ENCODE measurements at regions of chr11 and their contacts with region 1.

Region 1: GRCh38 chr11:117843666-117844484 is 19.3 kb upstream of the FXYD2 start:
- H3K4me3 ChIP-seq: no peak overlapping the region
- H3K27ac ChIP-seq: no peak overlapping the region
- H3K4me1 ChIP-seq: no peaks in the 10 kb centered on the region
- CTCF ChIP-seq: peak; percentile 64

Region 2: GRCh38 chr11:117690484-117691217 is 153.2 kb before region 1 on chr11:
- CTCF ChIA-PET with region 1: no interaction called
- POLR2A ChIA-PET with region 1: no interaction called
- H3K4me3 ChIP-seq: no peak overlapping the region
- H3K27ac ChIP-seq: no peak overlapping the region
- H3K4me1 ChIP-seq: no peaks in the 10 kb centered on the region
- CTCF ChIP-seq: no peak

Region 3: GRCh38 chr11:117828611-117829368 is 15.1 kb before region 1 on chr11:
- CTCF ChIA-PET with region 1: interaction called, 17 read pairs
- POLR2A ChIA-PET with region 1: no interaction called
- H3K4me3 ChIP-seq: no peak overlapping the region
- H3K27ac ChIP-seq: no peak overlapping the region
- H3K4me1 ChIP-seq: no peaks in the 10 kb centered on the region
- CTCF ChIP-seq: no peak

Region 4: GRCh38 chr11:117907251-117907981 is 63.5 kb after region 1 on chr11:
- CTCF ChIA-PET with region 1: interaction called, 20 read pairs
- POLR2A ChIA-PET with region 1: no interaction called
- H3K4me3 ChIP-seq: no peak overlapping the region
- H3K27ac ChIP-seq: no peak overlapping the region
- H3K4me1 ChIP-seq: no peaks in the 10 kb centered on the region
- CTCF ChIP-seq: no peak

Region 5: DNA sequence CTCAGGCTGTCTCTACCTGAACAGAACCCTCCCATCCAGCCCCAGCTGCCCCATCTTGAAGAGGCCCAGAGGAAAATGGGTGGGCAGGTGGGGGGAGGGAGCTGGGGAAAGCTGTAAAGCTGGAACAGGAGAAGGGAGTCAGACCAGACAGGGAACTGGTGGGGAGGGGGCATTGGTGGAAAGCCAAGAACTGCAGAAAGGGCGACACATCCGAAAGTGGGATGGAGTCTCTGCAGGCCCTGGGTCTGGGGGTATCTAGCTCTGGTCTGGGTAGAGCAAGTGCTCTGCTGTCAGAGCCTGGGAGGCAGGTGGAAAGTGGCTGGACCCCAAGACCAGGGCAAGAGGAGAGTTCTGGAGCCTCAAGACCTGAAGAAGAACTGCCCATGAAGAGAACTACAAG is 77.6 kb after region 1 on chr11:
- CTCF ChIA-PET with region 1: interaction called, 10 read pairs
- POLR2A ChIA-PET with region 1: no interaction called
- H3K4me3 ChIP-seq: no peak overlapping the region
- H3K27ac ChIP-seq: no peak overlapping the region
- H3K4me1 ChIP-seq: no peaks in the 10 kb centered on the region
- CTCF ChIP-seq: no peak

Region 6: DNA sequence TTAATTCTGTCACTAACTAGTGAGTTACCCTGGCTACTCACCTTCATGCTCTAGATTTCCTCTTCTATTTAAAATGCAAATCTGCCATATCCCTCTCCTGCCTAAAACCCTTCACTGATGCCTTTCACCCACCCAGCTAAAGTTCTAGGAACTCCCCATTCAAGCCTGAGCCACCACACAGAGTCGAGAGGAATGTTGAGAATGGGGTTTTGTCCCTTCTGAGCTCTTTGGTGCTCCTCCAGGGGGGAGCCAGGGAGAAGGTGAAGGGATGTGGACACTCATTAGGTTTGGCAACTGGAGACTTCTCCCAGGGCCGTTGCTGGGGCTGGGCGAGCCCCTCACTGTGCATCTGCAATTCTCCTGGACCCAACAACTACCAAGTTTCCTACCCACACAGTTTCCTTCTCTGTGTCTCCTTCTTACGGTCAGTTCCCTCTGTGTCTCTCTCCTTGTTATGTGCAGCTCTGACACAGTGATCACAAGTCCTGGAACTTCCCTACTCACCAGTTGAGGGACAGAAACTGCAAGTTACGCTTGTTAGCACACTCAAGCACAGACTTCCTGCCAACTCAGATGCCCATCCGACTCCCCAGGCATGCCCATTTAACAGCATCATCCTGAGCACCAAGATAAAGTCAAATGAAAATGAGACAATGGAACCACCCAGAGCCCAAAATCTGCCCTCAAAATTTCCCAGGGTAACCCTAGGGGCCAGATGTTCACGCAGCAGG is 135.8 kb after region 1 on chr11:
- CTCF ChIA-PET with region 1: no interaction called
- POLR2A ChIA-PET with region 1: no interaction called
- H3K4me3 ChIP-seq: no peak overlapping the region
- H3K27ac ChIP-seq: no peak overlapping the region
- H3K4me1 ChIP-seq: no peaks in the 10 kb centered on the region
- CTCF ChIP-seq: no peak

Region 7: GRCh38 chr11:118051611-118052461 is 208.0 kb after region 1 on chr11:
- CTCF ChIA-PET with region 1: interaction called, 27 read pairs
- POLR2A ChIA-PET with region 1: no interaction called
- H3K4me3 ChIP-seq: no peak overlapping the region
- H3K27ac ChIP-seq: no peak overlapping the region
- H3K4me1 ChIP-seq: no peaks in the 10 kb centered on the region
- CTCF ChIP-seq: no peak

Measured in HEK293 (cell line).